Mucosa of descending colon (tissue), 3 donors: ENCODE measurements at regions of chr20 and their contacts with region 1.

Region 1: DNA sequence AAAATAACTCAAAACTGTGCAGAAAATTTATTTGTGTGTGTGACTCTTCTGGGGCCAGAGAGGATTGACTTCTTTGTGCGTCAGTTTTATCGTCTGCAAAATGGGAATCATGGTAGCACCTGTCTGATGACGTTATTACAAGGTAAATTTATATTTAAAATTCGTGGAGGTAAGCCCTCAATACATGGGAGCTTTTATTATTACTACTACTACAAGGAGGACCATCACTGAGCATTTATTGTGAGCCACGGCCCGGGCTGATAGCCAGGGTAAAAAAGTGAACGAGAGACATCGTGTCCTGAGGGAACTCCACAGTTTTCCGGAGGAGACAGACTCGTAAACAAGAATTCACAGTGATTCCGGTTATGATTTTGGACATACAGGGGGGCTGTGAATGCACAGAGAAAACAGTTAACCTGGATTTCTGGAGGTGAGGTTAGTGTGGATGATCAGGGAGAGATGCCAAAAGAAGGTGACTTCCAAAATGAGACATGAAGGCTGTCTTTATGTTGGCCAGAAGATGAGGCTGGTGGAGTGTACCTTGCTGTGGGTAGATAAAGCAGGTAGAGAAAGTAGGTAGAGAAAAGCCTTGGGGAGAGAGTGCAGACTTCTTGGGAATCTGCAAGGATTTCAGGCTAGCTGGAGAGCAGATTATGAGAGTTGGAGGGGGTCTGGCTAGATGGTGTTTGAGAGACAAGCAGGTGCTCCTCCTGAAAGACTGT is 10.6 kb upstream of the SERINC3 start:
- DNase-seq: no peak
- ATAC-seq: no peak
- H3K4me3 ChIP-seq: peak overlapping the region; percentile 67
- H3K4me1 ChIP-seq: peaks cover 35% of the 10 kb centered on the region
- CTCF ChIP-seq: no peak

Region 2: DNA sequence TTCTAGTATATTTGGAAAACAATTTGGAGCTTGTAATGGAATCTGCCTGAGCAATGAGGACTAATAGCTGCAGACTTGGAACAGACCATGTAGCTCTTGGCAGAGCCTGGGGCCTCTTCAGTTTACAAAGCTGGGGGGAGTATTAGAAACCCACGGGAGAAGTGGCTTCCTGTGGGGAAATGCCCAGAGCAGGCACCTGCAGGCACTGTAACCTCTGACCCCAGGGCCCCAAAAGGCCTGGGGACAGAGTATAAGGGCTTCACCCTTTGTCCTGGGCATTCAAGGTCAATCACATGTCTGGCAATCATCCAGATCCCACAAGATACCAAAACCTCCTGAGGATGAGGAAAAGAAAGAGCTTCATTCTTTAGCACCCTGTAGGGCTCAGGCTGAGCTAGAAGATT is 69.4 kb after region 1 on chr20:
- intact Hi-C with region 1: loop called (anchors 5 to 10 kb)
- DNase-seq: peak in 2 of 3 donors; percentile 42 to 49
- ATAC-seq: peak; percentile 35
- H3K4me3 ChIP-seq: no peak overlapping the region
- H3K4me1 ChIP-seq: peaks cover 7% of the 10 kb centered on the region
- CTCF ChIP-seq: no peak

Region 3: GRCh38 chr20:44609511-44610312 is 77.3 kb after region 1 on chr20:
- intact Hi-C with region 1: loop called (anchors 5 to 10 kb)
- DNase-seq: peak; percentile 90 to 96 (median 93)
- ATAC-seq: peak; percentile 97
- H3K4me3 ChIP-seq: no peak overlapping the region
- H3K4me1 ChIP-seq: peaks cover 19% of the 10 kb centered on the region
- CTCF ChIP-seq: peak; percentile 93

Region 4: DNA sequence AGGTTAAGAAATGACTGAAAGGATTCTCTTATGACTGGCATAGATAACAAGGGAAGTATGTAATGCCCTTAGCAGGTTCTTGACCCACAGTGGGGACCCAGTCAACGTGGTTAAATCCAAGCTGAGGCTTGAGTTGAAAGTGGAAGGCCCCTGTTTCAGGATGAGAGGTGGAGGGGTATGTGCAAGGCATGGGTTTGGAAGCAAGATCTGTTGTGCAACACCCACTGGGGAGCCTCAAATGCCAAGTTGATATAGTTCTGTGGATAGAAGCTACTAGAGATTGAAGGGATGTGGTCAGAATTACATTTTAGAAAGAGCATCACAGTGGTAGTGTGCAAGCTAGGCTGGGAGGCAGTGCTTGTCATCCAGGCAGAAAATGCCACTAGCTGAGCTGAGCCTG is 382.5 kb after region 1 on chr20:
- intact Hi-C with region 1: no loop called
- DNase-seq: no peak
- ATAC-seq: no peak
- H3K4me3 ChIP-seq: no peak overlapping the region
- H3K4me1 ChIP-seq: peaks cover 12% of the 10 kb centered on the region
- CTCF ChIP-seq: no peak